Activated CD8-positive, alpha-beta memory T cell treated with anti-CD3 and anti-CD28 coated beads, Interleukin-2, amount 10 ng/mL, durations not matched to agents 7 days and 5 days (primary cell): ENCODE measurements at regions of chr7 and their contacts with region 1.

Region 1: DNA sequence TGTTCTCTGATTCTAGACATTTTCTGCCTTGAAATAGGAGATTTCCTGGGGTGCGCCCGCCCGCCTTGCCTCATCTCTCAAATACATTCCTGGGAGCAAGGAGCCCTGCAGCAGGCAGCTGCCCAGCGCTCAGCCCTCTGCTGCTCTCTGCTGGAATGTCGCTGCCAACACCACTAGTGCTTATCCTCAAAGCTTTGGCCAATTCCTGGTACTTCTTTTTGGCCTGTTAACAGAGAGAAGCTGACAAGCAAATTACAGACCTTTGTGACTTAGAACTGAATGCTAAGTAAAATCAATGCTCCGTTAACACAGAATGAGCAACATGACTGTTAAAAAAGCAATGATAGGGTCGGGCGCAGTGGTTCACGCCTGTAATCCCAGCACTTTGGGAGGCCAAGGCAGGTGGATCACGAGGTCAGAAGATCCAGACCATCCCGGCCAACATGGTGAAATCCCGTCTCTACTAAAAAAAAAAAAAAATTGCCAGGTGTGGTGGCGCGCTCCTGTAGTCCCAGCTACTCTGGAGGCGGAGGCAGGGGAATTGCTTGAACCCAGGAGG is 41.9 kb upstream of the SYPL1 start:
- DNase-seq: peak; percentile 78
- ATAC-seq: peak; percentile 96
- H3K4me3 Mint-ChIP-seq: no peak overlapping the region
- H3K27ac Mint-ChIP-seq: no peak overlapping the region
- H3K4me1 Mint-ChIP-seq: peaks cover 6% of the 10 kb centered on the region
- H3K27me3 Mint-ChIP-seq: peaks cover 43% of the 10 kb centered on the region

Region 2: DNA sequence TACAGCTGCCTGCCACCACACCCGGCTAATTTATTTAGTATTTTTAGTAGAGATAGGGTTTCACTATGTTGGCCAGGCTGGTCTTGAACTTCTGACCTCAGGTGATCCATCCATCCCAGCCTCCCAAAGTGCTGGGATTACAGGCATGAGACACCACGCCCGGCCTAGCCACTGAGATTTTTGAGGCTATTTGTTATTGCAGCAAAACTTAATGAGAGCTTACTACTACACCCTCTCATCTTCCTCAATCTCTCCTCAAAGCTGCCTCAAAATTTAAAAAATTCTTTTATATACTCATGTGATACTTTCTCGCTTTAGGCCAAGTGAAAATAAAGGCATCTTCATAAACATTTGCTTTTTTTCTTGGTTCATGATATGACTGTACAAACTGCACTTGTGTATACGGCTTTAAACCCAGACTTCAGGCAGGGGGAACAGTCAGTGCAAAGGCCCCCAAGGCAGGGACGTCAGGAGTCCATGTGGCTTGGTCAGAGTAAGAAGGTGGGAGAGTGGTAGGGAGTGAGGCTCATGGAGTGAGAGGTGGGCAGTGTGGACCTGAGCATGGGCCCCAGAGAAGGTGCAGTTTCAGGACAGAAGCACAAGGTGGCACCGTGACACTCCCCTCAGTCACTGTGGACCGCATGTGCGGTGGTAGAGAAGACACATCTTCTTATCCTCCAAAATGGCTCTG is 97.3 kb before region 1 on chr7:
- CTCF ChIA-PET with region 1: interaction called, 140 read pairs
- DNase-seq: peak; percentile 81
- ATAC-seq: peak; percentile 99
- H3K4me3 Mint-ChIP-seq: no peak overlapping the region
- H3K27ac Mint-ChIP-seq: peak overlapping the region; percentile 35
- H3K4me1 Mint-ChIP-seq: peaks cover 28% of the 10 kb centered on the region
- H3K27me3 Mint-ChIP-seq: peaks cover 20% of the 10 kb centered on the region

Region 3: DNA sequence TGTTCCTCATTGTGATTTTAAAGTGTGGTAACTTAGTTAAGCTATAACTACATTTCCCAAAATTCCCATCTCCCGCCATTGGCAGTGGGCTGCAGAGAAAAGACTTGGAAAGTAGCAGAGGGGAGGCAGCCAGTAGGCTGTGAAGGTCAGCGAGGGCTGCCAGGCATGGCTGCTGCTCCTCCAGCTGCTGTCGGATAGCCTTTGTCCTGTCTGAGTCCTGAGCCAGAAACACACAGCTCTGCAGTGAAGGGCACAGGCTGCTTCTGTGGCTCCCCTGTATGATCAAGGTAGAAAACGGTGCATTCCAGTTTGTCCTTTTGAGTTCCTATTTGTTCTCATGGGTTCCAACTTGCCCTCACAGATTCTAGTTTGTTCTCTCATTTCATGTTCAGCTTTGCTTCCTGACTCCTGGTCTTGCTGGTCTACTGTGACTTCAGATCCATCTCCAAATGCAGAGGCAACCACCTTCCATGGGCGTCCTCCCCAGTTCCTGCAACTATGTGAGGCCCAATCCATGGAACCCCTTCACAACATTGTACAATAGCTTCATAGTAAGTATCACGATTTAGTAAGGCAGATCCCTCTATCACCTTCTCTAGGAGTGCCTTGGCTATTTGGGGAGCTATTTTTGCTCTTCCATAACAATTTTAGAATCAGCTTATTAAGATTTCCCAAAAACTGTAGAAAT is 73.5 kb before region 1 on chr7:
- CTCF ChIA-PET with region 1: interaction called, 10 read pairs
- DNase-seq: no peak
- ATAC-seq: no peak
- H3K4me3 Mint-ChIP-seq: no peak overlapping the region
- H3K27ac Mint-ChIP-seq: no peak overlapping the region
- H3K4me1 Mint-ChIP-seq: peaks cover 12% of the 10 kb centered on the region
- H3K27me3 Mint-ChIP-seq: peaks cover 7% of the 10 kb centered on the region

Region 4: DNA sequence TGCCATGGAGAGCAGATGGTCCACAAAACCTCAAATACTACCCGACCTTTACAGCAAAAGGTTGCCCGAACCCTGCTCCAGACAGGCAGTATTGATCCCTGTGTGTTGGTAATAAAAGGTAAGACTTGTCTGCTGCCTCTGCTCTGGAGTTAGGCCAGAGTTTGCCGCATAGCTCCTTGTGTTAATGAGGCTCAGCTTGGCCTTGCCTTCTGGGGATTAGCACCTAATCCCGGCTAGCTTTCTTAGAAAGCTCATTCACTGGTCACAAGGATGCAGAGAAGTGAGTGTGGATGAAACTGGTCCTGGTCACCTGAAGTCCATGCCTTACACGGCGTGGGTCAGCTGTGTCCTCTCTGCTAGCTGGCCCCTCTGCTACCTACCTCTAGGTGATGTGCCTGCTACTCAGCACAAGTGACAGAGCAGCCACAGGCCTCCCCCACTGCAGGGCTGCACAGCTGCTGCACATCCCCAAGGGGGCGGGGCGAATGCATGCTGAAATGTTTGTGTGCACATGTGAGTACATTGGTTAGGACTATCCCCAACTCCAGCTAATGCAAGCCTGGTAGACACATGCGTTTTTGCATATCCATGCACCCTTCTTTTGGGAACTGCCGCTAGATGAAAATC is 10.1 kb before region 1 on chr7:
- CTCF ChIA-PET with region 1: interaction called, 15 read pairs
- DNase-seq: no peak
- ATAC-seq: no peak
- H3K4me3 Mint-ChIP-seq: no peak overlapping the region
- H3K27ac Mint-ChIP-seq: no peak overlapping the region
- H3K4me1 Mint-ChIP-seq: no peaks in the 10 kb centered on the region
- H3K27me3 Mint-ChIP-seq: peaks cover 19% of the 10 kb centered on the region